Esophagus muscularis mucosa (tissue), 4 donors: ENCODE measurements at regions of chr12 and their contacts with region 1.

Region 1: DNA sequence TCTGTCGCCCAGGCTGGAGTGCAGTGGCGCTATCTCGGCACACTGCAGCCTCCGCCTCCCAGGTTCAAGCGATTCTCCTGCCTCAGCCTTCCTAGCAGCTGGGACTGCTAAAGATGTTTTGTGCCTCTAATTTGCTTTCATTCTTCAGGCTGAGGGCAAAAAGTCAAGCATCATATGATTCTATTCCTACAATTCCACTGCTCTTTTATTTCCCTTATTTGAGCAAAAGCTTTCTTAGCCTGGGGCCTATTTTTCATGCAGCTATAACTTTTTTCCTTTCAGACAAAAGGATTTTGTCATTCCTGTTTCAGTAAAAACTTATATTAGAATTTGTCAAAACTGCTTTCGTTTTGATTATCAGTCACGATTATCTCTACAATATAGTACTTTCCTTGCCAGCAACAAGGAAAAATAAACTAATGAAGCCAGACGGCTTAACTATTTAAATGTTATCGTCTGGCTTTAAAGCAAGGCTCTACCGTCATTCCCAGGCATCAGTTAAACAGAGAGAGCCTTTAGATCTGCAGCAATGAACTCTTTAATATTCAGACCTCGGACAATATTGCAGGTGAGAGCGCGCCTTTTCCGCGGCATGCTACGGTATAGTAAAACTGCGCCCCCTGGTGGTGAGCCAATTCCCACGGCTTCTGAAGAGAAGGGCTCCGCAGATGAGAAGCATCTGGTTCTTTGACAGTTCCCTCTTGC is 1.4 kb upstream of the SLC2A13 start:
- DNase-seq: peak; percentile 98
- H3K4me3 ChIP-seq: peak overlapping the region; percentile 80 to 99 (median 92)
- H3K27ac ChIP-seq: peak overlapping the region; percentile 86 to 95 (median 90)
- H3K4me1 ChIP-seq: peaks cover 4 to 47% (median 44%) of the 10 kb centered on the region in 4 donors
- H3K27me3 ChIP-seq: no peaks in the 10 kb centered on the region
- CTCF ChIP-seq: peak; percentile 89 to 95 (median 92)
- EP300 ChIP-seq: no peak
- POLR2A ChIP-seq: no peak

Region 2: GRCh38 chr12:39764944-39765560 is 342.2 kb before region 1 on chr12:
- intact Hi-C with region 1: loop called (anchors 5 kb)
- DNase-seq: no peak
- H3K4me3 ChIP-seq: no peak overlapping the region
- H3K27ac ChIP-seq: no peak overlapping the region
- H3K4me1 ChIP-seq: no peaks in the 10 kb centered on the region
- H3K27me3 ChIP-seq: no peaks in the 10 kb centered on the region
- CTCF ChIP-seq: peak; percentile 59 to 77 (median 62)
- EP300 ChIP-seq: no peak
- POLR2A ChIP-seq: no peak

Region 3: GRCh38 chr12:40010899-40011774 is 96.1 kb before region 1 on chr12:
- intact Hi-C with region 1: loop called (anchors 1 kb)
- DNase-seq: no peak
- H3K4me3 ChIP-seq: peak overlapping the region; percentile 18 to 44 (median 32)
- H3K27ac ChIP-seq: peak overlapping the region in 2 of 4 donors; percentile 8 to 38
- H3K4me1 ChIP-seq: peaks cover 13 to 21% (median 18%) of the 10 kb centered on the region in 4 donors
- H3K27me3 ChIP-seq: no peaks in the 10 kb centered on the region
- CTCF ChIP-seq: peak; percentile 72 to 80 (median 75)
- EP300 ChIP-seq: no peak
- POLR2A ChIP-seq: no peak

Region 4: GRCh38 chr12:40054554-40055227 is 52.6 kb before region 1 on chr12:
- intact Hi-C with region 1: loop called (anchors 5 kb)
- DNase-seq: no peak
- H3K4me3 ChIP-seq: peak overlapping the region; percentile 24 to 42 (median 33)
- H3K27ac ChIP-seq: peak overlapping the region; percentile 69 to 78 (median 74)
- H3K4me1 ChIP-seq: peaks cover 22 to 59% (median 49%) of the 10 kb centered on the region in 4 donors
- H3K27me3 ChIP-seq: no peaks in the 10 kb centered on the region
- CTCF ChIP-seq: no peak
- EP300 ChIP-seq: no peak
- POLR2A ChIP-seq: no peak